ENCODE measurements at regions of chr11 and their contacts with region 1.

Region 1: DNA sequence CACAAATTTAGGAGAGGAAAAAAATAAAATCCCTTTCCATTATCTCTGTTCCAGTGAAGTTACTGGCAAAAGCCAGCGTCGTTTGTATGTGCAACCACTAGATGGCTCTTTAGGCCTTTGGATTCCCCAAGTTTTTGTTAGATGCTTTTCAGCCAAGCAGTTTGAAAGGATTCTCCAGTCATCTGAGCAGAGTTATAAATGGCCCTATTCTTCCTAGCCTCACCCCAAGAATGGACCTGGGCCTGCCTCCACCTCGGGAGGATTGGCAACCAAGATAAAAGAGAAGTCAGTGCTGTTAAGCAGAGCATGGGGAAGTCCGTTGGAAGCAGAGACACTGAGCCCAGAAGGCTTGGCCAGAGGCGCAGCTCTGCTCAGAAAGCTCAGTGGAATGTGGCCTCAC is 15.4 kb downstream of the FAM181B start:
- DNase-seq: peak; percentile 32 to 47
- H3K4me3 ChIP-seq: no peak overlapping the region
- H3K27ac ChIP-seq: no peak overlapping the region
- H3K4me1 ChIP-seq: no peaks in the 10 kb centered on the region
- H3K27me3 ChIP-seq: no peaks in the 10 kb centered on the region
- CTCF ChIP-seq: peak; percentile 34 to 84 (median 72)
- POLR2A ChIP-seq: no peak

Region 2: DNA sequence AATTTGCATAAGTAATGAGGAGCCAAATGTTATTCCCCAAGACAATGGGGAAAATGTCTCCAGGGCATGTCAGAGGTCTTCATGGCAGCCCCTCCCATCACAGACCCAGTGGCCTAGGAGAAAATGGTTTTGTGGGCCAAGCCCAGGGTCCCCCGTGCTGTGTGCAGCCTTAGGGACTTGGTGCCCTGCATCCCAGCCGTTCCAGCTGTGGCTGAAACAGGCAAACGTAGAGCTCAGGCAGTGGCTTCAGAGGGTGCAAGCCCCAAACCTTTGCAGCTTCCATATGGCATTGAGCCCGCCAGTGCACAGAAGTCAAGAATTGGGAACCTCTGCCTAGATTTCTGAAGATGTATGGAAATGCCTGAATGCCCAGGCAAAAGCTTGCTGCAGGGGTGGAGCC is 64.6 kb before region 1 on chr11:
- intact Hi-C with region 1: no loop called
- DNase-seq: no peak
- H3K4me3 ChIP-seq: no peak overlapping the region
- H3K27ac ChIP-seq: no peak overlapping the region
- H3K4me1 ChIP-seq: no peaks in the 10 kb centered on the region
- H3K27me3 ChIP-seq: no peaks in the 10 kb centered on the region
- CTCF ChIP-seq: no peak
- POLR2A ChIP-seq: no peak

Region 3: DNA sequence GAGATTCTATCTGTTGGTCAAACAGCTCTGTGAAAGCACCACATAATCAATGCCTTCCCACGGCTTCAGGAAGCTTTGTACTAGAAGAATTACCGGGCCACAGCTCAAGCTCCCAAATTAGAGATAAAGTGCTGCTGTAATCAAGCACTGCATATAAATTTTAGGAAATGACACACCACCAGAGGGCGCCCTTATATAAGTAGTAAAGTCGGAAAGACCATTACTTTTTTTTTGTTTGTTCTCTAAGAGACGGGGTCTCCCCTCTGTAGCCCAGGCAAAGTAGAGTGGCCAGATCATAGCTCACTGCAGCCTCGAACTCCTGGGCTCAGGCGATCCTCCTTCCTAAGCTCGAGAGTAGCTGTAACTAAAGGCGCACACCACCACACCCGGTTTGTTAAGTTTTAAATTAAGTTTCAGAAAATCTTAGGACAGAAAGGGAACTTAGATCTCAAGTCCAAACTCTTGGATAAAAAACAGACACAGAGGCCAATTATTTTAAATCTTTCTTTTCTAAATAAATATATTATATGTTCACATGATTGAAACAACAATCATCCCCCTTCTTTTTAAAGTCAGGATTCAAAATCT is 149.3 kb after region 1 on chr11:
- intact Hi-C with region 1: loop called (anchors 5 kb)
- DNase-seq: peak; percentile 77 to 83
- H3K4me3 ChIP-seq: no peak overlapping the region
- H3K27ac ChIP-seq: no peak overlapping the region
- H3K4me1 ChIP-seq: peaks cover 15 to 19% of the 10 kb centered on the region in 2 donors
- H3K27me3 ChIP-seq: no peaks in the 10 kb centered on the region
- CTCF ChIP-seq: peak in 5 of 6 experiments; percentile 58 to 71 (median 63)
- POLR2A ChIP-seq: no peak

Region 4: GRCh38 chr11:83827940-83828554 is 1109.7 kb after region 1 on chr11:
- intact Hi-C with region 1: loop called (anchors 10 kb)
- DNase-seq: no peak
- H3K4me3 ChIP-seq: no peak overlapping the region
- H3K27ac ChIP-seq: no peak overlapping the region
- H3K4me1 ChIP-seq: no peaks in the 10 kb centered on the region
- H3K27me3 ChIP-seq: no peaks in the 10 kb centered on the region
- CTCF ChIP-seq: peak in 3 of 6 experiments; percentile 54 to 57 (median 56)
- POLR2A ChIP-seq: no peak